Head of caudate nucleus (tissue), 42 donors: ENCODE measurements at regions of chr1 and their contacts with region 1.

Region 1: GRCh38 chr1:156659994-156660751 is 17.0 kb downstream of the NES start:
- DNase-seq: peak; percentile 84 to 99 (median 95)

Region 2: GRCh38 chr1:156612666-156613065 is 47.5 kb before region 1 on chr1:
- intact Hi-C with region 1: no loop called
- DNase-seq: no peak

Region 3: GRCh38 chr1:156625436-156626078 is 34.6 kb before region 1 on chr1:
- intact Hi-C with region 1: loop called (anchors 2 kb)
- DNase-seq: peak in 41 of 42 donors; percentile 43 to 90 (median 74)

Region 4: GRCh38 chr1:156677616-156678596 is 17.7 kb after region 1 on chr1:
- intact Hi-C with region 1: loop called (anchors 1 kb)
- DNase-seq: peak in 41 of 42 donors; percentile 58 to 92 (median 79)